ENCODE measurements at regions of chr18 and their contacts with region 1.

Region 1: GRCh38 chr18:46173393-46174341 is 69.5 kb downstream of the HAUS1 start:
- DNase-seq: peak; percentile 98
- H3K4me3 Mint-ChIP-seq: peak overlapping the region; percentile 96
- H3K27ac Mint-ChIP-seq: peak overlapping the region; percentile 96
- H3K4me1 Mint-ChIP-seq: peaks cover 48% of the 10 kb centered on the region
- H3K27me3 Mint-ChIP-seq: peaks cover 2% of the 10 kb centered on the region

Region 2: DNA sequence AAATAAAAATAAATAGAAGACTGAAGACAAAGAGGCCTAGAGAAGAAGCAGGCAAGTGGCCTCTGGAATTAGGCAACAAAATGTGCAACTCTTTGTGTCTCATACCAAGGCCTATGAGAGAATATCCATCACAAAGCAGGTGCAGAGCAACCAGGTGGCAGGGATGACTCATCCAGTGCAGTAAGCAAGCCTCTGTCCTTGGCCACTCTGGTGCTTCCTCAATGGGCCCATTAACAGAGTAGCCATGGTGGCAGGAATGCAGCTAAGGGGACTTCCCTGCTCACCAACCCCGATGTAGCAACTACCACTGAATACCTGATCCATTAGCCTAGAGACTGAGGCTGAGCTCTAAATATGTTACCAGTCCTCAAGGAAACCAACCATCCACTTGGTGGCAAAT is 195.6 kb before region 1 on chr18:
- intact Hi-C with region 1: no loop called
- DNase-seq: no peak
- H3K4me3 Mint-ChIP-seq: no peak overlapping the region
- H3K27ac Mint-ChIP-seq: no peak overlapping the region
- H3K4me1 Mint-ChIP-seq: peaks cover 6% of the 10 kb centered on the region
- H3K27me3 Mint-ChIP-seq: no peaks in the 10 kb centered on the region

Region 3: DNA sequence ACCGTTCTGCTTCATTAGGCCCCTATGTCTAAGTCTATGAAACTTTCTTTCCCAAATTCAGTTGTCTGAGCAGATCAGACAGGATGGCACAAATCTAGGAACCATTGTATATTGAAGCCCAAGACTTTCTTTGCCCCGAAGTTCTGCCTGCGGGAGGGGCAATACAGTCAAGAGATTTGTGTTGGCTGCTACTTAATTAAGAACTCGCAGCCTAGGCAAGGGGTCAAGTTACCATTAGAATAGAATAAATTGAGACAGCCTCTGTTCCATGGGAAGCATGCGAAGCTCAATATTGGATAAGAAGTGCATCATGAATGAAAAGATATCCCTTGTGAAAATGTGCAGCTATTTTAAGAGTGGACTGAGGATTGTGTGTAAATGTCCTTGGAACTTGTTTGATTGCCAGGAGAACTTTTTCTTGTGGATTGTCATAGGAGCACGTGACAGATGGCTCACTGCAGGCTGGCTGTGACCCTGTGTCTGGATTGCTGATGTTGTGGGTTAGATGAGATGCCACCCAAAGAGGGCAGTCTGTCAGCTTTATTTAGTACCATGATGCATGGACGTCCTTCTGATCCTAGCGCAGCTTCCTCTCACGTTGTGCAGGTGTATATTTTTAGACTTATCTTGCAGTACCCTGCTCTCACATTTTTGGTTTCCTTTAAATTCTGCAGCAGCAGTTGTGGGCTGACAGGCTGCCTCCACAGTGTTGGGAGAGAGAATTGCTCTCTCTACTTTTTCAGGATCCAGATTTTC is 38.6 kb before region 1 on chr18:
- intact Hi-C with region 1: no loop called
- DNase-seq: no peak
- H3K4me3 Mint-ChIP-seq: no peak overlapping the region
- H3K27ac Mint-ChIP-seq: peak overlapping the region; percentile 32
- H3K4me1 Mint-ChIP-seq: no peaks in the 10 kb centered on the region
- H3K27me3 Mint-ChIP-seq: no peaks in the 10 kb centered on the region

Region 4: GRCh38 chr18:46148810-46149209 is 24.9 kb before region 1 on chr18:
- intact Hi-C with region 1: loop called (anchors 2 kb)
- DNase-seq: peak; percentile 88
- H3K4me3 Mint-ChIP-seq: no peak overlapping the region
- H3K27ac Mint-ChIP-seq: peak overlapping the region; percentile 7
- H3K4me1 Mint-ChIP-seq: peaks cover 26% of the 10 kb centered on the region
- H3K27me3 Mint-ChIP-seq: no peaks in the 10 kb centered on the region

Region 5: DNA sequence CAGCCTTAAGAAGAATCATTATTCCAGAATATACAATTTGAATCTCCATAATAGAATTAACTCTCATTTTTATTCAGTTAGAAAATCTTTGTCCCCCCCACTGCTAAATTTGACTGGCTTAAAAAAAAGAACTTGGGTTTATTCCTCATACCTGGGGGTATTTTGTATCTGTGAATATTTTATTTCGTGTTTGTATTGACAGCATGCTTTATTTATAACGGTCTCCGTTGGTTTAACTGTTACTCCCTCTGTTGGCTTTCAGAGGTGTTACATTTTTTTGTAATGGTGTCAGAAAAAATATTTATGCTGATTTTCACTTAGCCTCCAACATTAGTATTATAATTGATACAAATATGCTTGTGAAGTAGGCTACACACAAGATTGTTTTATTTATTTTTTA is 39.6 kb after region 1 on chr18:
- intact Hi-C with region 1: loop called (anchors 1 kb)
- DNase-seq: no peak
- H3K4me3 Mint-ChIP-seq: peak overlapping the region; percentile 22
- H3K27ac Mint-ChIP-seq: peak overlapping the region; percentile 44
- H3K4me1 Mint-ChIP-seq: peaks cover 63% of the 10 kb centered on the region
- H3K27me3 Mint-ChIP-seq: no peaks in the 10 kb centered on the region

Region 6: DNA sequence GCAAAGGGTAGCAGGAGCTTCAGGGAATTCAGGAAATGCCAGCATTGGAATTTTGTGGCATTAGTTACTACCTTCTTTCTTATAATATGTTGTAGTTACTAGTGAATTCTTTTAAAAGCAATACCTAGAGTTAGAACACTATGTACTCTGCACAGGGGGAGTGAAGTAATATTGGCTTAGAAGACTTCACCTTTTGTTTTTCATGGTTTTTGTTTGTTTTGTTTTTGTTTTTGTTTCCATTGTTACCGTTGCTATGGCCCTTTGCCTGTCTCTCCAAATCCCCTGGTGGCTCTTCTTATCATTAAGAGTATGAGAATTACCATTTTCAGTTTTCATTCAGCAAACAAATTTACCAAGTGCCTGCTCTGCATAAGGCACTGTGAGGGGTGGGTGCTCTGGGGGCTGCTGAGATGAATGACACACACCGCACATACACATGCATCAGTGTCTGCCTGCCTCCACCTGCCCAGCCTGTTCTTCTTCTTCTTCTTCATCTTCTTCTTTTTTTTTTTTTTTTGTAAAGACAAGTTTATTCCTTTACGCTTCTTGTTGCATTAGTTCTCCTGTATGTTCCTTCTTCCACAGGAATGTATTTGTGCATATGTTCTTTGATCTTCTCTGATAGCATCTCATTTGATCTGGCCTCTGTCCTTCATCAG is 90.7 kb after region 1 on chr18:
- intact Hi-C with region 1: no loop called
- DNase-seq: no peak
- H3K4me3 Mint-ChIP-seq: no peak overlapping the region
- H3K27ac Mint-ChIP-seq: peak overlapping the region; percentile 64
- H3K4me1 Mint-ChIP-seq: peaks cover 57% of the 10 kb centered on the region
- H3K27me3 Mint-ChIP-seq: no peaks in the 10 kb centered on the region

Region 7: DNA sequence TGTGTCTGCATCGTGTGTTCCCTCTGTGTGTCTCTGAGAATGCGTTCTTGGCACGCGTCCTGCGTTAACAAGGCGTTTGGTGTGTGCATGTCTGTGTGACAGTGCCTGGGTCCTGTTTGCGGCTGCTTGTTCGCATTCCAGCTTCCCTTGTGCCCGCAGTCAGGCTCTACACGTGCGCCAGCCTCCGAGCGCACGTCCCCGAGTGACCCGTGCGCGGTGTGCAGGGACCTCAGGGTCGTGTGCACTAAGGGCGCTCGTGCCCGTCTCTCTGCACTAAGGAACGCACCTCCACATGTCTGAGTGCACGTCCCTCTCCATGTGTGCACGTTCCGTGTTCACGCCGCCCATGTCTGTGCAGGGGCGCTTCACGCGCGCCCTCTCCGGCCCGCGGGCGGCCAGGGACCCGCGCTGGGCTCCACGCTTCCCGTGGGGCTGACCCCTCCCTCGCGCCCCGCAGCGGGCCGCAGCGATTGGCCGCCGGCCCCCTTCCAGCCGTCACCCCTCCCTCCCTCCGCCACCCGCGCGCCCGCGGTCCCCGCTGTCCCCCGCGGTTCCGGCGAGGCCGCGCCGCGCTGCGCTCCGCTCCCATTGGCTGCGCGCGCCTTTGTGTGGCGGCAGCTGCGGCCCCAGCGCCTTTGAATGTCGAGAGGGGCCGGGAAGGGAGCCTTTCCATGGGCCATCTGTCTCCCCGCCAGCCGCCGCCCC is 159.9 kb after region 1 on chr18:
- intact Hi-C with region 1: loop called (anchors 5 kb)
- DNase-seq: peak; percentile 85
- H3K4me3 Mint-ChIP-seq: peak overlapping the region; percentile 84
- H3K27ac Mint-ChIP-seq: peak overlapping the region; percentile 76
- H3K4me1 Mint-ChIP-seq: peaks cover 35% of the 10 kb centered on the region
- H3K27me3 Mint-ChIP-seq: peaks cover 67% of the 10 kb centered on the region

Measured in activated CD4-positive, alpha-beta T cell treated with anti-CD3 and anti-CD28 coated beads, Interleukin-2, amount 10 ng/mL, durations not matched to agents 24 days and 14 days (primary cell).